AG04450 (cell line): ENCODE measurements at regions of chr12 and their contacts with region 1.

Region 1: GRCh38 chr12:12032851-12033588 is 37.7 kb upstream of the BCL2L14 start:
- DNase-seq: peak; percentile 76
- H3K4me3 ChIP-seq: peak overlapping the region; percentile 60
- H3K27ac ChIP-seq: no peak overlapping the region
- H3K27me3 ChIP-seq: no peaks in the 10 kb centered on the region
- CTCF ChIP-seq: peak; percentile 91

Region 2: DNA sequence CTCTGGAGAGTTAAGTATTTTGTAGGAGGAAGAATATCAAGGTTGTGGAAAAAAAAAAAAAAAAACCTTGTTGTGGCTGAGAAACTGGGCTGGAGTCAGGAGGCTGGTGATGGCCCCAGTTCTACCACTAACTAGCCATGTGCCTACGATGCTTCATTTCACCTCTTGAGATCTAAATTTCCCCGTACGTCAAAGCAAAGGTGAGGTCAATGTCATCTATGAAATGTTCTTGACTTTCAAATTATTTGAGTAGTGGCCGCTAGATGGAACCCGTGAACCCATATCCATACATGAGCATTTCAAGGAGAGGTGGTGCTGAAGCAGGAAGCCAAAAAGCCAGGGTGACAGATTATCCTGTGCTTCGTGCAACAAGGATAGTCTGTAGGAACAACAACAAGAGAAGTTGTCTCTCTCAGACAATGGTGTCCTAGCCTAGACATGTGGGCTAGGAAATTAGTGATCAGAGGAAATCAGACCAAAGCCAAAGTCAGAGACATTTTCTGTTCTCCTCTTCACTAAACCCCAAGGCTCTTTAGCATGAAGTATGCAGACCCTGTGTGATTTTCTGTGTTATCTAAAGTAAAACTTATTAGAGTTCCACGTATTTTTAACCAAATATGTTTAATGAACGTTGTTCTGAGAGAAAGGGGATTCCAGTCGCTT is 479.0 kb before region 1 on chr12:
- CTCF ChIA-PET with region 1: interaction called, 116 read pairs
- POLR2A ChIA-PET with region 1: no interaction called
- DNase-seq: peak; percentile 13
- H3K4me3 ChIP-seq: no peak overlapping the region
- H3K27ac ChIP-seq: no peak overlapping the region
- H3K27me3 ChIP-seq: peaks cover 26% of the 10 kb centered on the region
- CTCF ChIP-seq: peak; percentile 74

Region 3: GRCh38 chr12:11581179-11581755 is 451.8 kb before region 1 on chr12:
- CTCF ChIA-PET with region 1: interaction called, 296 read pairs
- POLR2A ChIA-PET with region 1: interaction called, 3 read pairs
- DNase-seq: peak; percentile 59
- H3K4me3 ChIP-seq: no peak overlapping the region
- H3K27ac ChIP-seq: no peak overlapping the region
- H3K27me3 ChIP-seq: no peaks in the 10 kb centered on the region
- CTCF ChIP-seq: peak; percentile 48

Region 4: DNA sequence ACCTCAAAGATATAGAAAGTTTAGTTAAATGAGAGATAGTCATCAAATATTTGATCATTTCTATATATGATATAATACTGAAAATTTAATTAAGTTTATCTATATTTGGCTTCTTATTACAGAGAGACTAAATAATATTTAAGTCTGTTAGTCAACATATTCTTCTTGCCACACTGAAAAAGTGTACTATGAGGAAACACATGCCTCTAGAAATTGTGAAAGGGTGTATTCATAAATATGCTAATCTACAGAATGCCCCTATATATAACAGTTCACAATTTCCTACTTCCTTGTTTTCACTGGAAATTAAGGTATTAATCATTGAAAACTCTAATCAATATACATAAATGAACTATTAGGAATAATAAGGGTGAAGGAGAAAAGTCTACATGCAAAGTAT is 415.0 kb before region 1 on chr12:
- CTCF ChIA-PET with region 1: interaction called, 11 read pairs
- POLR2A ChIA-PET with region 1: no interaction called
- DNase-seq: no peak
- H3K4me3 ChIP-seq: no peak overlapping the region
- H3K27ac ChIP-seq: no peak overlapping the region
- H3K27me3 ChIP-seq: no peaks in the 10 kb centered on the region
- CTCF ChIP-seq: no peak

Region 5: GRCh38 chr12:12007001-12007712 is 25.9 kb before region 1 on chr12:
- CTCF ChIA-PET with region 1: interaction called, 11 read pairs
- POLR2A ChIA-PET with region 1: no interaction called
- DNase-seq: no peak
- H3K4me3 ChIP-seq: no peak overlapping the region
- H3K27ac ChIP-seq: no peak overlapping the region
- H3K27me3 ChIP-seq: peaks cover 8% of the 10 kb centered on the region
- CTCF ChIP-seq: no peak

Region 6: DNA sequence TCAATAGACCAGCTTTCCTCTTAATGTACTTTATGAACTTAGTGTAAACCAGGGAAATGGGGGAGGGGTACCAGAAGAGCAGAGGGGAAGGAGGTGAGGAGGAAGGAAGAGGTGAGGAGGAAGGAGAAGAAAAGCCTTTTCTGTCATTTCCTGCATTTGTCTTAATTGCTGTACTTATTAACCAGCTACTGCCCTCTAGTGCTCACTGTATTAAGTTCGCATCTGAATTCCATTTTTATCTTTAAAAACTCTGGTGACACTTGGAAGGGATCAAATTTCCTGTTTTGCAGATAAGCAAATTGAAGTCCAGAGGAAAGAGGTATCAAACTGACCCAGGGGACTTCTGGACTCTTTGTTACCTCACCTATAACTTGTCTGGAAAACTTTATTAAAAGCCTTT is 294.8 kb after region 1 on chr12:
- CTCF ChIA-PET with region 1: interaction called, 26 read pairs
- POLR2A ChIA-PET with region 1: interaction called, 4 read pairs
- DNase-seq: no peak
- H3K4me3 ChIP-seq: no peak overlapping the region
- H3K27ac ChIP-seq: no peak overlapping the region
- H3K27me3 ChIP-seq: no peaks in the 10 kb centered on the region
- CTCF ChIP-seq: peak; percentile 77